ENCODE measurements at regions of chr10 and their contacts with region 1.

Region 1: GRCh38 chr10:30639946-30640786 is 10.6 kb upstream of the LYZL2 start:
- DNase-seq: peak; percentile 57
- H3K4me3 Mint-ChIP-seq: no peak overlapping the region
- H3K27ac Mint-ChIP-seq: no peak overlapping the region
- H3K4me1 Mint-ChIP-seq: peaks cover 14% of the 10 kb centered on the region
- H3K27me3 Mint-ChIP-seq: peaks cover 14% of the 10 kb centered on the region
- CTCF ChIP-seq: peak; percentile 67

Region 2: GRCh38 chr10:30656233-30656632 is 16.1 kb after region 1 on chr10:
- CTCF ChIA-PET with region 1: interaction called, 12 read pairs
- POLR2A ChIA-PET with region 1: no interaction called
- intact Hi-C with region 1: no loop called
- DNase-seq: no peak
- H3K4me3 Mint-ChIP-seq: no peak overlapping the region
- H3K27ac Mint-ChIP-seq: no peak overlapping the region
- H3K4me1 Mint-ChIP-seq: no peaks in the 10 kb centered on the region
- H3K27me3 Mint-ChIP-seq: peaks cover 55% of the 10 kb centered on the region
- CTCF ChIP-seq: no peak

Region 3: GRCh38 chr10:30687698-30688219 is 47.6 kb after region 1 on chr10:
- CTCF ChIA-PET with region 1: interaction called, 12 read pairs
- POLR2A ChIA-PET with region 1: no interaction called
- intact Hi-C with region 1: no loop called
- DNase-seq: peak; percentile 78
- H3K4me3 Mint-ChIP-seq: no peak overlapping the region
- H3K27ac Mint-ChIP-seq: no peak overlapping the region
- H3K4me1 Mint-ChIP-seq: no peaks in the 10 kb centered on the region
- H3K27me3 Mint-ChIP-seq: no peaks in the 10 kb centered on the region
- CTCF ChIP-seq: peak; percentile 86

Measured in MCF 10A (cell line).